ENCODE measurements at regions of chr10 and their contacts with region 1.

Region 1: GRCh38 chr10:119872860-119873681 is 428 bp upstream of the MCMBP start:
- DNase-seq: peak; percentile 78 to 96 (median 86)
- ATAC-seq: peak; percentile 90
- H3K4me3 ChIP-seq: peak overlapping the region; percentile 80
- H3K4me3 Mint-ChIP-seq: peak overlapping the region; percentile 93
- H3K27ac ChIP-seq: peak overlapping the region; percentile 78 to 87
- H3K27ac Mint-ChIP-seq: peak overlapping the region; percentile 94
- H3K4me1 ChIP-seq: peaks cover 37% of the 10 kb centered on the region
- H3K4me1 Mint-ChIP-seq: peaks cover 35% of the 10 kb centered on the region
- H3K27me3 ChIP-seq: no peaks in the 10 kb centered on the region
- H3K27me3 Mint-ChIP-seq: no peaks in the 10 kb centered on the region
- CTCF ChIP-seq: no peak

Region 2: DNA sequence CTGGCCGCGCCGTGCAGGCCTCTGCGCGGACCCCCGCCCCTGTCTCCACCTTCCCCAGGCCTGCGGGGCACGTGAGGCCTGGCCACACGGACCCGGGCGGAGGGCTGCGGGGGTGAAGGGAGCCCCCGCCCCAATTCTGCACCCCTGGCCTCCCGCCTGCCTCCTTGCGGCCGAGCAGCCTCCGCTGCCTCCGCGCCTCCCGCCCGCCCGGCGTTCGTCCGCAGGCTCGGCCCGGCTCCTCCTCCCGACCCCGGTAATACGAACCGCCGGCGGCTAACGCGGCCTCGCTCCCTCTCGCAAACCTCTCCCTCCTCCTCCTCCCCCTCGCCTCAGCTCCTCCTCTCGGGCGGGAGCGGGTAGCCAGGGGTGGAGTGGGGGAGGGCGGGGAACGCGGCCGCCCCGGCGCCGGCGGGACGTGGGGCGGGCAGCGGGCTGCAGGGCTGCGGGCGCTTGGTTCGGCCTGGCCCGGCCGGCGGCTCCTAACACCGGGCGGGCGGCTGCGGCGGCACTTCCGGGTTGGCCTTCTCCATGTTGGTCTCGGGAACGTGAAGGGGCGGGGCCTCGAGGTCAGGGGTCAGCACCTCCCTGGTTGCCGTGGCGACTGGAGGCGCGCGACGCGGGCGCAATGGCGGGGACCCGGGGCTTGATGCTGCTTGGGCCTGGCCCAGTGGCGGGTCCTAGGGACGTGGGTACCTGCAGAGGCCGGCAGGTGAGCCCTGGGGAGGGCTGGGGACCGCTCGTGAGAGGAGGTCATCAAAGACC is 1826.5 kb before region 1 on chr10 and contains the start of gene RAB11FIP2:
- CTCF ChIA-PET with region 1: no interaction called
- POLR2A ChIA-PET with region 1: no interaction called
- intact Hi-C with region 1: loop called in 1 of 2 experiments (anchors 5 kb)
- DNase-seq: peak; percentile 91 to 98 (median 95)
- ATAC-seq: peak; percentile 93
- H3K4me3 ChIP-seq: peak within 1 kb of the TSS; percentile 79
- H3K4me3 Mint-ChIP-seq: peak within 1 kb of the TSS; percentile 94
- H3K27ac ChIP-seq: peak within 1 kb of the TSS in 1 of 2 donors; percentile 60
- H3K27ac Mint-ChIP-seq: peak within 1 kb of the TSS; percentile 79
- H3K4me1 ChIP-seq: peaks cover 13% of the 10 kb centered on the region
- H3K4me1 Mint-ChIP-seq: peaks cover 51% of the 10 kb centered on the region
- H3K27me3 ChIP-seq: no peaks in the 10 kb centered on the region
- H3K27me3 Mint-ChIP-seq: no peaks in the 10 kb centered on the region
- CTCF ChIP-seq: no peak
- total RNA-seq, gene RAB11FIP2: 35.6 to 37.7 TPM

Region 3: DNA sequence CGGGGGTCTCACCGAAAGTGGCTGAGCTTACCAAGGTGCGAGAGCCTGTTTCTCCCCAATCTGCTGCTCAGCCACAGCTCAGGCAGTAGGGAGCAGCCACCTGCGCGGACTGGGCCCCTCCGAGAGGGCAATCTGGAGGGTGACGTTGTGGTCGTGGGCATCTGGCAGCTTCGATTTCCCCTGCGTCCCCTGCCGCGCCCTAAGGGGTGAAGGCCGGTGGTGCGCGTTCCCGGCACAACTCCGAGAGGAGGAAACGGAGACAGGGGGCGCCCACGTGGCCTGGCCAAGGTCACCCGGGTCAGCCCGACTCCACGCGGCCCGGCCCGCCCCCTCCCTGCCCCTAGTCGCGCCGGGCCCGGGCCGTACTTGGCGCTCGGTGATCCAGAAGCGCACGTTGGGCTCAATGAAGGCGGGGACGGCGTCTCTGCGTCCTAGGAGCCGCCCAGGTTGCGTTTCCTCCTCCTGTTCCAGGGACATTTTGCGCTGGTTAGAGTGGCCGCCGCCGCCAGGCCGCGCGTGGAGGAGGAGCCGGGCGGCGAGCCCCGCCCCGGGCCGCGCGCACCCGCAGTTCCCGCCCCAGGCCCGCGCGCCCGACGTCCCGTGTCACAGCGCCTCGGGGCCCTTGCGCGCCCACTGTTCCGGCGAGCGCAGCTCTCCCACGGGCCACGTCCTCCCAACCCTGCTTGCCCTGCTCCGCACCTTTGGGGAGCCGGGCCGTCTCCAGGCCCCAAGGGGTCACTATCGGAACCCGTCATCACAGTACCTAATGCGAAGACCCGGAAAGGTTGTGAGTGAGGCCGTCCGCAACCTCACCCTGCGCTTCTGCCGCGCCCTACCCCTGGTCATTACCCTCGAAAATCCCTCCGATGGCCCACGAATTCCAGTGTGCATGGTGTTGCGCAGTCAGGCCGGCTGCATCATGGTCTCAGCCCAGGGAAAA is 707.6 kb before region 1 on chr10 and contains the start of gene SFXN4:
- CTCF ChIA-PET with region 1: no interaction called
- POLR2A ChIA-PET with region 1: interaction called, 5 read pairs
- intact Hi-C with region 1: loop called in 1 of 2 experiments (anchors 5 kb)
- DNase-seq: peak; percentile 59 to 91 (median 74)
- ATAC-seq: peak; percentile 94
- H3K4me3 ChIP-seq: peak within 1 kb of the TSS; percentile 92
- H3K4me3 Mint-ChIP-seq: peak within 1 kb of the TSS; percentile 94
- H3K27ac ChIP-seq: peak within 1 kb of the TSS; percentile 50 to 75
- H3K27ac Mint-ChIP-seq: peak within 1 kb of the TSS; percentile 90
- H3K4me1 ChIP-seq: peaks cover 24% of the 10 kb centered on the region
- H3K4me1 Mint-ChIP-seq: peaks cover 49% of the 10 kb centered on the region
- H3K27me3 ChIP-seq: no peaks in the 10 kb centered on the region
- H3K27me3 Mint-ChIP-seq: no peaks in the 10 kb centered on the region
- CTCF ChIP-seq: no peak
- total RNA-seq, gene SFXN4: 7.1 to 7.8 TPM

Region 4: GRCh38 chr10:119650692-119651513 is 222.2 kb before region 1 on chr10 and contains the start of gene BAG3:
- CTCF ChIA-PET with region 1: no interaction called
- POLR2A ChIA-PET with region 1: interaction called, 18 read pairs
- intact Hi-C with region 1: no loop called
- DNase-seq: peak; percentile 60 to 89 (median 76)
- ATAC-seq: peak; percentile 52
- H3K4me3 ChIP-seq: peak within 1 kb of the TSS; percentile 72
- H3K4me3 Mint-ChIP-seq: peak within 1 kb of the TSS; percentile 100
- H3K27ac ChIP-seq: peak within 1 kb of the TSS; percentile 77 to 88
- H3K27ac Mint-ChIP-seq: peak within 1 kb of the TSS; percentile 99
- H3K4me1 ChIP-seq: peaks cover 27% of the 10 kb centered on the region
- H3K4me1 Mint-ChIP-seq: peaks cover 49% of the 10 kb centered on the region
- H3K27me3 ChIP-seq: no peaks in the 10 kb centered on the region
- H3K27me3 Mint-ChIP-seq: no peaks in the 10 kb centered on the region
- CTCF ChIP-seq: no peak
- total RNA-seq, gene BAG3: 65.1 to 65.8 TPM

Region 5: GRCh38 chr10:119892188-119893065 is 19.4 kb after region 1 on chr10 and contains the start of gene SEC23IP:
- CTCF ChIA-PET with region 1: interaction called, 7 read pairs
- POLR2A ChIA-PET with region 1: interaction called, 82 read pairs
- intact Hi-C with region 1: loop called (anchors 1 kb)
- DNase-seq: peak; percentile 82 to 94 (median 86)
- ATAC-seq: peak; percentile 99
- H3K4me3 ChIP-seq: peak within 1 kb of the TSS; percentile 98
- H3K4me3 Mint-ChIP-seq: peak within 1 kb of the TSS; percentile 95
- H3K27ac ChIP-seq: peak within 1 kb of the TSS; percentile 76 to 91
- H3K27ac Mint-ChIP-seq: peak within 1 kb of the TSS; percentile 95
- H3K4me1 ChIP-seq: peaks cover 27% of the 10 kb centered on the region
- H3K4me1 Mint-ChIP-seq: peaks cover 59% of the 10 kb centered on the region
- H3K27me3 ChIP-seq: no peaks in the 10 kb centered on the region
- H3K27me3 Mint-ChIP-seq: no peaks in the 10 kb centered on the region
- CTCF ChIP-seq: no peak
- total RNA-seq, gene SEC23IP: 18.1 to 21.1 TPM

Measured in CD4-positive, alpha-beta T cell (primary cell).